ENCODE measurements at regions of chr9 and their contacts with region 1.

Region 1: DNA sequence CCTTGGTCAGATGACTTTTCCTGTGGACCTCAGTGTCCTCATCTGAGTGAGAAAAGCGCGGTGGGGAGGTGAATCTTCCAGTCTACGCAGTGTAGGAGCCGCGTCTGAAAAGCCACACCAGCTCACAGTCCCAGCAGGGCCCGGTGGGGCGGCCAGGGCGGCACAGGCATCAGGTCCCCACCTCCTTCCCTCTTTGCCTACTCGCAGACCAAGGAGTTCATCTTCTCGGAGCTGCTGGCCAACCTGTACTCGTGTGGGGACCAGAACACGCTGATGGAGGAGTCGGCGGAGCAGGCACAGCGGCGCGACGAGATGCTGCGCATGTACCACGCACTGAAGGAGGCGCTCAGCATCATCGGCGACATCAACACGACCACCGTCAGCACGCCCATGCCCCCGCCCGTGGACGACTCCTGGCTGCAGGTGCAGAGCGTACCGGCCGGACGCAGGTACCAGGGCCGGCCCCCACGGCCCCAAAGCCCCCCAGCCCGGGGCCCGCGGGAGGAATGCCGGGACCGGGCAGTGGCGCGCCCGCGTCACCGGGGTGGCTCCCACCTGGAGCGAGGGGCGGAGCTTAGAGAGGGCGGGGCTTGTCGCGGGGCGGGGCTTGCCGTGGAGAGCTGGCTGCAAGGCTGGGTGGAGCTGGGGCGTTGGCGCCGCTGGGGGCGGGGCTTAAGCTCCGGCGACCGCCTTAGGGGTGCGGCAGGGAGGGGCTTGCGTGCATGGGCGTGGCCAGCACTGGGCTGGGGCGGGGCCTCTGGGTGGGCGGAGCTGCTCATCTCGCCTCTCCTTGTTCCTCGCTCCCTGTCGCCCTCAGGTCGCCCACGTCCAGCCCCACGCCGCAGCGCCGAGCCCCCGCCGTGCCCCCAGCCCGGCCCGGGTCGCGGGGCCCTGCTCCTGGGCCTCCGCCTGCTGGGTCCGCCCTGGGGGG is 25.6 kb downstream of the GOLGA2 start:
- DNase-seq: peak; percentile 99
- H3K4me3 Mint-ChIP-seq: peak overlapping the region; percentile 85
- H3K27ac Mint-ChIP-seq: no peak overlapping the region
- H3K4me1 Mint-ChIP-seq: peaks cover 9% of the 10 kb centered on the region
- H3K27me3 Mint-ChIP-seq: peaks cover 32% of the 10 kb centered on the region

Region 2: GRCh38 chr9:128275996-128276573 is 25.9 kb after region 1 on chr9 and contains the starts of genes GOLGA2 and SWI5:
- intact Hi-C with region 1: loop called (anchors 1 kb)
- DNase-seq: peak; percentile 100
- H3K4me3 Mint-ChIP-seq: peak within 1 kb of the TSS; percentile 93
- H3K27ac Mint-ChIP-seq: peak within 1 kb of the TSS; percentile 95
- H3K4me1 Mint-ChIP-seq: peaks cover 45% of the 10 kb centered on the region
- H3K27me3 Mint-ChIP-seq: peaks cover 3% of the 10 kb centered on the region
- total RNA-seq, gene GOLGA2: 44.1 and 50.4 TPM in 2 replicates
- total RNA-seq, gene SWI5: 13.6 and 14.3 TPM in 2 replicates

Measured in activated CD4-positive, alpha-beta T cell treated with anti-CD3 and anti-CD28 coated beads, Interleukin-2, amount 10 ng/mL, durations not matched to agents 24 days and 14 days (primary cell).